ENCODE measurements at regions of chr17 and their contacts with region 1.

Region 1: GRCh38 chr17:8710813-8711212 is 33.8 kb downstream of the CCDC42 start:
- DNase-seq: no peak

Region 2: DNA sequence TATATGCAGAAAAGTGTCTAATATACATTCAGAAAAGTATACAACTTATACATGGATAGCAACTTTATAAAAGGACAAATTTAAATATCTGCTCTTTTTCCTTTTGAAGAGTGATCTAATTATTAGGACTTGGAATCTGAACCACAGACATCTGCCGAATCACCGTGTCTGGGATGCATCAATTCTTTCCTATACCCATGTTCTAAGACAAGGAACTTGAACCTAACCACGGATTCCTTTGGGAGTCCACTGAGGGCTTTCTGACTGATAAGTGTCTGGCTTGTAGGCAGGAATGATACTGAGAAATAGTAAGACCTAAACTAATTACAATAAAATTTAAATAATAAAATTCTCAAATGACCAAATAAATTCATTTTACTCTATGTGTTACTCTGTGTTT is 221.0 kb before region 1 on chr17:
- in situ Hi-C with region 1: loop called (anchors 10 kb)
- DNase-seq: no peak

Measured in G401 (cell line).